ENCODE measurements at regions of chr19 and their contacts with region 1.

Region 1: DNA sequence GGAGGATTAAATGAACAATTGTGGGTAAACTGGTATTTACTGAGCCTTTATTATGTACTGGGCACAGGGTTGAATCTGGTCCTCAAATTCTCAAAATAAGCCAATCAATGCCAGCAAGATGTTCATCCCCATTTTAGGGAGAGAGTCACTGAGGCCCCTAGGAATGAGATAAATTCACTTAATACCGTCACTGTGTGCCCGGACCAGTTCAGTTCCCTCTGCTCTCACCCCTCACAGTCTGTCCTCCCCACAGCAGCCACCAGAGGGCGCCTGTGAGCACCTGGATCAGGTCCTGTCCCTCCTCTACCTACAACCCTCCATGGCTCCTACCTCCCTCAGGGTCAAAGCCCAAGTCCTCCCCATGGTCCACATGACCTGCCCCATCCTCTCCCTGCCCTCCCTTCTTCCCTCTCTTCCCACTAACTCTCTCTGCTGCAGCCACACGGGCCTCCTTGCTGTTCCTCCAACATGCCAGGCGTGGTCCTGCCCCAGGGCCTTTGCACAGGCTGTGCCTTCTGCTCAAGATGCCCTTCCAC is 42.0 kb upstream of the NFIC start:
- DNase-seq: peak; percentile 57
- H3K4me3 ChIP-seq: no peak overlapping the region
- H3K27ac ChIP-seq: no peak overlapping the region
- H3K4me1 ChIP-seq: no peaks in the 10 kb centered on the region
- H3K27me3 ChIP-seq: no peaks in the 10 kb centered on the region
- CTCF ChIP-seq: peak; percentile 36 to 83 (median 61)
- POLR2A ChIP-seq: no peak

Region 2: GRCh38 chr19:3471954-3472655 is 147.7 kb after region 1 on chr19:
- intact Hi-C with region 1: loop called (anchors 5 kb)
- DNase-seq: no peak
- H3K4me3 ChIP-seq: no peak overlapping the region
- H3K27ac ChIP-seq: no peak overlapping the region
- H3K4me1 ChIP-seq: no peaks in the 10 kb centered on the region
- H3K27me3 ChIP-seq: no peaks in the 10 kb centered on the region
- CTCF ChIP-seq: peak; percentile 71 to 90 (median 76)
- POLR2A ChIP-seq: no peak